HepG2 (cell line): ENCODE measurements at regions of chr2 and their contacts with region 1.

Region 1: DNA sequence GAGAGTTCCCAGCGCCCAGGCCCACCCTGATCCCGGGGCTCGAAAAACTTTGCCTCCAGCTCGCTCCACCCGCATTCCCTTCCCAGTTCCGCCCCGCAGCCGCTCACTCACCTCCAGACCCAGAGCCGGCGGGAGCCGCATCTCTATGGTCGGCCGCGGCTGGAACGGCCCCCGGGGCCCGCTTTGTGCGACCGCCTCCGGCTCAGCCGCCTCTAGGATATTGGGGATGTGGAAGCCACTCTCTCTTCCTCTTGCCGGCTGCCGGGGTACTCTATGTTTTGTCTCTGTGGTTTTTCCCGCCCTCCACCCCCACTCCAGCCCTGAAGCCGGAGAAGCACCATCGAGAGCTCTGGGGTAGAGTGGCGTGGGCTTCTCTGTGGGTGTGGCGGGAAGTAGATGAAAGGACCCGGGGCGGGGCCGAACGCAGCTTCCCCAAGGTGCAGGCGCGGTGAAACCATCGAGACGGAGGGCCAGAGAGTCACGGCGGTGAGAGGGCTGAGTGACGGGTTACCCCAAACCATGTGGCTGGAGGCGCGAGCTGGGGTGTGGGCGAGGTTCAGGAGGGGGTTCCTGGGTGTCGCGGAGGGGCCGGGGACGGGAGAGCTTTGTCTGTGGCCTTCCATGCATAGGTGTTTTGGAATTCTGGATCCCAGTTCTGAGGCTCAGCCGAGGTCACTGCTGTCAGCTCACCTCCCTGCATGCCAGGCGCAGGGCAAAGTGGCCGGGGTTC is at the starts of genes BCS1L and ZNF142:
- DNase-seq: peak; percentile 89
- ATAC-seq: peak; percentile 96
- H3K4me3 ChIP-seq: peak within 1 kb of the TSS; percentile 78 to 92 (median 80)
- H3K27ac ChIP-seq: peak within 1 kb of the TSS; percentile 59
- H3K4me1 ChIP-seq: peaks cover 24% of the 10 kb centered on the region
- H3K27me3 ChIP-seq: no peaks in the 10 kb centered on the region; a peak in 1 of 5 replicates
- CTCF ChIP-seq: peak; percentile 32
- EP300 ChIP-seq: peak in 1 of 2 experiments; percentile 25; a peak in 1 of 4 replicates
- POLR2A ChIP-seq: peak; percentile 66 to 93
- RAD21 ChIP-seq: peak; percentile 51
- total RNA-seq, gene BCS1L: 52.1 and 76.0 TPM in 2 replicates
- total RNA-seq, gene ZNF142: 10.4 and 11.4 TPM in 2 replicates

Region 2: DNA sequence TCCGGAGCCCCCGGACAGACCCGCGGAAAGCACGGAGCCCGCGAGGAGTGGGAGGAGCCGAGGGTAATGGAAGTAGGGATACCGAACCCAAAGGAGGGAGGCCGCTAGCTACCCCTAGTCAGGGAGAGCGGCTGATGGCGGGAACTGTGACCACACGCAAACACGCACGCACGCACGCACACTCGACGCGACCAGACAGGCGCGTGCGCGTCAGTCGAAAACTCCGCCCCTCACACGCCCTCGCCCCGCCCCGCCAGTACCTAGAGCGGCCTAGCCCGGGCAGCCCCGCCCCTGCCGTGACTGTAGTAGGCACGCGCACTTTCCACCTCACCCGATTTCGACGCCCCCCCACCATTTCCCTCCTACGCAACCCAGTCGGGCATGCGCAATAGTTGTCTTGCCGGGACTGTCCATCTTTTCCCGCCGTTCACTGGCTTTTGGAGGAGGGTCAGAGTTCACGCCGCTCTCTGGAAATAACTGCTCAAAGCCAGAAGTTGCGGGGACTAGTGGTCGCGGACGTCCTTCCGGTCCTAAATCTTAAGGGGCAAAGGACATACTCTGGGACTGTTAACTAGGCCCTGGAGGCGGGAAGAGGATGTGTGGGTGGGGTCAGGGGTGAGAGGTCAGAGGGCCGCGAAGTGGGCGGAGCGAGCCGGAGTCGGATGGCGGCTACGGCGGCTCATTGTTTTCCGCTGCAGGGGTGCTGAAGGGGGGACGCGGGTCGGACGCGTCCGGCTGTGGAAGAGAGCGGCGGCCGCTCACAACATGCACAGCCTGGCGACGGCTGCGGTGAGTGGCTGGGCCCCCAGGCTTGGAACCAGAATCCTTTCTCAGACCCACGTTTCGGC is 91.0 kb before region 1 on chr2 and contains the starts of genes CNOT9 and USP37:
- CTCF ChIA-PET with region 1: no interaction called
- POLR2A ChIA-PET with region 1: interaction called, 3 read pairs
- in situ Hi-C with region 1: no loop called
- intact Hi-C with region 1: loop called (anchors 2 kb)
- DNase-seq: peak; percentile 98
- ATAC-seq: peak; percentile 90
- H3K4me3 ChIP-seq: peak within 1 kb of the TSS; percentile 89 to 97 (median 91)
- H3K27ac ChIP-seq: peak within 1 kb of the TSS; percentile 97
- H3K4me1 ChIP-seq: peaks cover 63% of the 10 kb centered on the region
- H3K27me3 ChIP-seq: peaks cover 0 to 6% of the 10 kb centered on the region in 2 experiments; a peak in 1 of 5 replicates
- CTCF ChIP-seq: no peak; the same call in 1 of the 2 replicates
- EP300 ChIP-seq: peak; percentile 67 to 70; a peak in 3 of 4 replicates
- POLR2A ChIP-seq: peak; percentile 92 to 98
- RAD21 ChIP-seq: 0 out of 2 replicates have a peak, but pooled peaks have one; percentile 24
- total RNA-seq, gene CNOT9: 92.4 and 101 TPM in 2 replicates
- total RNA-seq, gene USP37: 30.6 and 36.2 TPM in 2 replicates

Region 3: DNA sequence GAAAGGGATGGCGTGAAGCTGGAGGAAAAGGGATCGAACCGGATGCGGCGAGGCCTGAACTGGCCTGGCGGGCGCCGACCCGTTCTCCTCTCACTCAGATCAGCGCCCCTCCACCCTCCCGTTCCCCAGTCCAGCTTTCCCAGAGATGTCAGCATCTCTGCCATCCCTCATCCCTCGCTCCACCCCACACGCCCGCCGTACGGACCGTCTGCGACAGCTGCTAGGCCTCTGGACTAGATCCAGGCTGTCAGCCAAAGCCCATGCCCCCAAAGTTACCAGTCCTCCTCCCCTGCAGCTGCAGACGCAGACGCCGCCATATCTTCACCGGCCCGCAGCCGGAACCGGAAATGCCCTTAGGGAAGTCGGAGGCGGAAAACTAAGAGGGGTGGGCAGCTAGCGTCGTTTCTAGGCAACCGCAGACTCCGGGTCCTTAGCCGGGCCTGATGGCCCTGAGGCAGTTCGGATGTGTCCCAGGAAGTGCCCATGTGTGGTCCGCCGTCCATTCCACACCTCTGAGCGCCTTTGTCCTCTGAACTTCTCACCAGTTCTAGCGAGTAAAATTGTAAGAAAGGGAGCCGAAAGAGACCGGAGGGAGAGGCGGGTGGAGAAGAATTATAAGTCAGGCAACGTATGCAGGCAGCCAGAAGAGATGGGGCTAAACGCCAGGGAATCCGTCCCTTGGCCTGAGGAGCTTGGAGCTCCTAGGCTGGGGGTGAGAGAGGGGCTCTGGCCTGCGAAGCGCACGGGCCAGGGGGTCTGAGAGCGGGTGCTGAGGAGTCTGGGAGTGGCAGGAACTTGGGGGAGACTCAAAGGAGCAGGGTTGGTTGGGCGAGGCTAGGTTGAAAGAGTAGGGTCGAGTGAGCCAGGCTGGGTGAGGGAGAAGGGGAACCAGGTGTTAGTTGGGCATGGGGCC is 12.5 kb after region 1 on chr2 and contains the starts of genes RNF25 and STK36:
- CTCF ChIA-PET with region 1: no interaction called
- POLR2A ChIA-PET with region 1: interaction called, 130 read pairs
- in situ Hi-C with region 1: no loop called
- intact Hi-C with region 1: no loop called
- DNase-seq: peak; percentile 91
- ATAC-seq: peak; percentile 98
- H3K4me3 ChIP-seq: peak within 1 kb of the TSS; percentile 80 to 99 (median 98)
- H3K27ac ChIP-seq: peak within 1 kb of the TSS; percentile 63
- H3K4me1 ChIP-seq: peaks cover 18% of the 10 kb centered on the region
- H3K27me3 ChIP-seq: no peaks in the 10 kb centered on the region; a peak in 1 of 5 replicates
- CTCF ChIP-seq: peak; percentile 26; the same call in 1 of the 2 replicates
- EP300 ChIP-seq: no peak
- POLR2A ChIP-seq: peak; percentile 85 to 94
- RAD21 ChIP-seq: peak; percentile 28; the same call in 1 of the 2 replicates
- total RNA-seq, gene RNF25: 37.0 and 37.1 TPM in 2 replicates
- total RNA-seq, gene STK36: 17.6 and 45.9 TPM in 2 replicates

Region 4: GRCh38 chr2:218691234-218691633 is 31.8 kb after region 1 on chr2:
- CTCF ChIA-PET with region 1: interaction called, 4 read pairs
- POLR2A ChIA-PET with region 1: interaction called, 7 read pairs
- in situ Hi-C with region 1: no loop called
- intact Hi-C with region 1: loop called (anchors 1 kb)
- DNase-seq: no peak
- ATAC-seq: no peak
- H3K4me3 ChIP-seq: no peak overlapping the region
- H3K27ac ChIP-seq: no peak overlapping the region
- H3K4me1 ChIP-seq: peaks cover 17% of the 10 kb centered on the region
- H3K27me3 ChIP-seq: no peaks in the 10 kb centered on the region
- CTCF ChIP-seq: no peak
- EP300 ChIP-seq: no peak
- POLR2A ChIP-seq: no peak
- RAD21 ChIP-seq: no peak

Region 5: DNA sequence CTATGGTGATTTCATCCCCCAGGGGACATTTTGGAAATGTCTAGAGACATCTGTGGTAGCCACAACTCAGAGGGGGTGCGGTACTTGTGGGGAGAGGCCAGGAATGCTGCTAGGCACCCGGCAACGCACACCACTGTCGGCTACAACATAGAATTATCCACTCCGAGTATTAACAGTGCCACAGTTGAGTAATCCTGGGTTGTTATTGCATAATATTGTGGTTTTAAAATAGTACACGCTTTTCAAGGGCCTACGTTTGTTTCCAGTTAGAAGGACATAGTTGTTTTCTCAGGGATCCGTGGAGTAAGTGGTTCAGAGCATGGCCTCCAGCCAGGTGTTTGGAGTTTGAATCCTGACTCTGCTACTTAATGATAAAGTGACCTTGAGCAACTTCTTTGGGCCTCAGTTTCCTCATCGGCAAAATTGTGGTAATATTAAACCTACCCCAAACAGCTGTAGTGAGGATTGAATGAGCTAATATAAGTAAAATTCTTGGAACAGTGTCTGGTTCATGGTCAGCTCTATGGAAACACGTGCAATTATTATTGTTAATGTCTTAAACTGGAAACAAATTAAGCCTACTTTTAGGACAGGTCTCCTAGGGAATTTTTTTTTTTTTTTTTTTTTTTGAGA is 147.0 kb after region 1 on chr2:
- CTCF ChIA-PET with region 1: no interaction called
- POLR2A ChIA-PET with region 1: interaction called, 3 read pairs
- in situ Hi-C with region 1: no loop called
- intact Hi-C with region 1: loop called (anchors 1 kb)
- DNase-seq: peak; percentile 91
- ATAC-seq: peak; percentile 81
- H3K4me3 ChIP-seq: peak overlapping the region in 2 of 3 experiments; percentile 38 to 40; a peak in 4 of 6 replicates
- H3K27ac ChIP-seq: peak overlapping the region; percentile 54
- H3K4me1 ChIP-seq: peaks cover 32% of the 10 kb centered on the region
- H3K27me3 ChIP-seq: no peaks in the 10 kb centered on the region
- CTCF ChIP-seq: no peak
- EP300 ChIP-seq: peak; percentile 86 to 98
- POLR2A ChIP-seq: no peak
- RAD21 ChIP-seq: no peak